MCF 10A (cell line): ENCODE measurements at regions of chr17 and their contacts with region 1.

Region 1: DNA sequence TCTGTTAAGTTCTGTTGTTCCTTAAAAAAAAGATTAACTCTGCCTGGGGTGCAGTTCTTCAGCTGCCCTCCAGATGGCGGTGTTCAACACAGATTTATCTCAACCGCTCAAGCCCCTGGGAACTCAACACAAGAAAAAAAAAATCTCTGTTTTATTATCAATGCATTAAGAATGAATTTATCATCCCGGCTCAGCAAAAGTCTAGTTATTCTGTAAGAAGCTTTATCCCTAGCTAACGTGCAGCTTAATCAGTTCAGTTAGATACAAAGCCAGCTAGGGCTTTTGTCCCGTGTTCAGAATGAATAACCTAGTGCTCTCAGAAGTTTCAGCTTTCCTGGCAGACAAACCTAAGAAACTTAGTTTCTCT is 475.9 kb upstream of the CCL2 start:
- DNase-seq: peak; percentile 30
- H3K4me3 Mint-ChIP-seq: no peak overlapping the region
- H3K27ac Mint-ChIP-seq: no peak overlapping the region
- H3K4me1 Mint-ChIP-seq: no peaks in the 10 kb centered on the region
- H3K27me3 Mint-ChIP-seq: no peaks in the 10 kb centered on the region
- CTCF ChIP-seq: peak; percentile 81

Region 2: DNA sequence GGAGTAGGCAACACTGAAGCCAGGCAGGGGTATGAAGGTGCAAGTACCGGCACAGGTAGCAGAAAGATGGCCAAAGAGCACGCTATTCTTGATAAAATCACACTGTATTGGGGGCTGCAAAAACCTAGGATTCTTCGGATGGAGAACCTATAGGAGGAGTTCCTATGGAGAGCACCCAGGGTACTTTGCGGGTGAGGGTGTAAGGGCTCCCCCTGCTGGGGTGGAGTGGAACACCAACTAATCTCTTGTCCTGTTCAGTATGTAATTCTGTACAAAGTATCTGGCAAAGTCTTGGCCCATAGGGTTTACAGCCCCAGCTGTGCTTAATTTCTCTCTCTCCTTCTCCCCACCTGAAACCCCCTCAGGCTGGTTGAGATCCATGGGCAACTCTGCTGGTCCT is 93.0 kb before region 1 on chr17:
- CTCF ChIA-PET with region 1: no interaction called
- POLR2A ChIA-PET with region 1: no interaction called
- intact Hi-C with region 1: no loop called
- DNase-seq: no peak
- H3K4me3 Mint-ChIP-seq: no peak overlapping the region
- H3K27ac Mint-ChIP-seq: no peak overlapping the region
- H3K4me1 Mint-ChIP-seq: no peaks in the 10 kb centered on the region
- H3K27me3 Mint-ChIP-seq: no peaks in the 10 kb centered on the region
- CTCF ChIP-seq: no peak

Region 3: GRCh38 chr17:33769066-33769465 is 10.1 kb before region 1 on chr17:
- CTCF ChIA-PET with region 1: interaction called, 21 read pairs
- POLR2A ChIA-PET with region 1: no interaction called
- intact Hi-C with region 1: no loop called
- DNase-seq: no peak
- H3K4me3 Mint-ChIP-seq: no peak overlapping the region
- H3K27ac Mint-ChIP-seq: no peak overlapping the region
- H3K4me1 Mint-ChIP-seq: no peaks in the 10 kb centered on the region
- H3K27me3 Mint-ChIP-seq: no peaks in the 10 kb centered on the region
- CTCF ChIP-seq: no peak

Region 4: DNA sequence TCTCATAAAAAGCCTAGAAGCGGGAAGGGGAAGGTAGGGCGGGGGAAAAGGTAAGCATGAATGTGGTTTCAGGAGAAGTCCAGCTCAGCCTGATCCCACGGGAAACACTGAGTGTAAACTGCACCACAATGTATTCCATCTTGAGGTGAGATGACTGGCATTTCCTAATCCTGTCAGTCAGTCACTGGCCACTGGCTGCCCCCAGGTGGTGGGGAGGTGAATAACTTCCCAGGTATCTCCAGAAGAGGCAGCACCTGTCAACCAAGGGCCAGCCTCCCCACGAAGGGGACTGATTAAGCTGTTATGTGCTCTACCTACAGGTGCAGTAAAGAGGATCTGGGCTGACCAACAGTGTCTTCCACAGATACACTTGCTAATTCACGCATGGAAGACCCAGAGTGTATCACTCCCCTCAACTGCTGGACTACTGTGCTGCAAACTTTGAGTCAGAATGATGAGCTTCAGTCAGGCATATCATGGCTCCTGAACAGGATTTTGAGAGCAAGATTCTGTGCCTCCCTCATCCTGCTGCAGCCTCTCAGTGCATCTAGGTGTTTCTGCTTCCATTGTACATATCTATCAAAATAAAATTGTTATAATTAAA is 367.3 kb after region 1 on chr17:
- CTCF ChIA-PET with region 1: interaction called, 24 read pairs
- POLR2A ChIA-PET with region 1: no interaction called
- intact Hi-C with region 1: loop called (anchors 2 kb)
- DNase-seq: peak; percentile 0
- H3K4me3 Mint-ChIP-seq: no peak overlapping the region
- H3K27ac Mint-ChIP-seq: no peak overlapping the region
- H3K4me1 Mint-ChIP-seq: no peaks in the 10 kb centered on the region
- H3K27me3 Mint-ChIP-seq: no peaks in the 10 kb centered on the region
- CTCF ChIP-seq: peak; percentile 23